CD8-positive, alpha-beta T cell (primary cell): ENCODE measurements at regions of chr12 and their contacts with region 1.

Region 1: DNA sequence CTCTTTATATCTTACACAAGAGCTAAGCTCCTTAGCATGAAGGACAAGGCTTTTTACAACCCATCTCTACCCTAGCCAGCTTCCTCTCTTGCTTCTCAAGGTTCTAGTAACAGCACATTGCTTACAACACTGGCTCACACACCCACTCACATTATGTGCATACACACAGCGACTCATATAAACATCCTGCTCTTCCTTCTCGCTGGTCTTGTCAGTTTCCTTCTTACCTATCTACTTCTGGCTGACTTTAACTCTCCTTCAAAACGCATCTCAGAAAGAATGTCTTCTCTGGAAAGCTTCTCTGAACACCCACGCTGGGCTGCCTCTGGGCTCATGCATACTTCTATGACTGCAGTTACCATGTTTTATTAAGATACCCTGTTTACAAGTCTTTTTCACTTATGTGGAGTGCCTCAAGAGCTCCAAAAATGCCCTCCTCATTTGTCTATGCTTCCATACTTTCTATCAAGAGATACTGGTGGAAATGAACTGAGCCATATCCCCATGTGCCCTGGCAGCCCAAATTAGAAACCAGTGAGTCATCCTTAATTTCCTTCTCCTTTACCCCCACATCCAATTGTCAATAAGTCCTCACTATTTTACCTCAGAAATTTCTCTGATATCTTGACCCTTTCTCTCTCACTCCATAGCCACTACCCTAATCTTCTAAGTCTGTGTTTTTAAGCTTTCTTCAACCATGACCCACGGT is 126.9 kb upstream of the KRAS start:
- DNase-seq: peak in 7 of 9 experiments; percentile 7 to 73 (median 41)
- ATAC-seq: peak; percentile 92
- H3K4me3 ChIP-seq: no peak overlapping the region
- H3K4me3 Mint-ChIP-seq: peak overlapping the region; percentile 51
- H3K27ac ChIP-seq: peak overlapping the region; percentile 41 to 75
- H3K27ac Mint-ChIP-seq: peak overlapping the region; percentile 92
- H3K4me1 ChIP-seq: peaks cover 32% of the 10 kb centered on the region
- H3K4me1 Mint-ChIP-seq: peaks cover 49% of the 10 kb centered on the region
- H3K27me3 ChIP-seq: no peaks in the 10 kb centered on the region
- H3K27me3 Mint-ChIP-seq: no peaks in the 10 kb centered on the region
- CTCF ChIP-seq: no peak

Region 2: DNA sequence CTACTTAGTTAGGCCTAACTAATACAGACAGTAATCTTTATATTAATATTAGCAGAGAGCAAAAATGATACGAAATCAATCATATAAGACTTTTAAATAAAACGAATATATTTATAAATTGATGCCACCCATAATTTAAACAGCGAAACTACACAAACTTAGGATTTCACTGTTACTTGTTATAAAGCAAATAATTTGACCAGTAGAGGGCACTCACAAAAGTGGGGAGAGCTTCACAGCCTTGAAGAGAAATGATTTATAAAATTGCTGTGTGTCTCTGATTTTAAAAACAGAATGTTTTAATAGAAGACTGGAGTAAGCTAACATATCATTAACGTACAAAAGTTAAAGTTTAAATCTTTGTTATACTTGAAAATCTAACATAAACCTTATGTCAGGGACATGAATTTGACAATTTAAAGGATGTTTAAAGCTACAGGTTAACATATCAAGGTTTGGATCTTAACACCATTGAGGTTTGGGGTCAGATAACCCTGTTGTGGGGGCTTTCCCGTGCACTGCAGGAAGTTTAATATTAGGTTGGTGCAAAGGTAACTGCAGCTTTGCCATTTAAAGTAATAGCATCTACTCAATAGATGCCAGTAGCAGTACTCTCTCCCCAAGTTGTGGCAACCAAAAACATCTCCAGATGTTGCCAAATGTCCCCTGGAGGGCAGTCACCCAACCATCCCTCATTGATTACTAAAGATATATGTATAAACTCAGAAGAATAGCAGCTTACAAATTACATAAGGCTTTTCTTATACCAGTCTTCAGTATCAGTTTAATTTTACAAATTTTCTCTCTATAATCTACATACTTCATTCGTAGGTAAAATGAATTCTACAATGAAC is 136.2 kb before region 1 on chr12:
- CTCF ChIA-PET with region 1: interaction called, 11 read pairs
- POLR2A ChIA-PET with region 1: interaction called, 15 read pairs
- intact Hi-C with region 1: no loop called
- DNase-seq: peak in 7 of 9 experiments; percentile 6 to 87 (median 37)
- ATAC-seq: peak; percentile 94
- H3K4me3 ChIP-seq: no peak overlapping the region
- H3K4me3 Mint-ChIP-seq: no peak overlapping the region
- H3K27ac ChIP-seq: peak overlapping the region; percentile 9 to 70
- H3K27ac Mint-ChIP-seq: peak overlapping the region; percentile 81
- H3K4me1 ChIP-seq: peaks cover 9% of the 10 kb centered on the region
- H3K4me1 Mint-ChIP-seq: peaks cover 65% of the 10 kb centered on the region
- H3K27me3 ChIP-seq: no peaks in the 10 kb centered on the region
- H3K27me3 Mint-ChIP-seq: no peaks in the 10 kb centered on the region
- CTCF ChIP-seq: peak; percentile 96

Region 3: DNA sequence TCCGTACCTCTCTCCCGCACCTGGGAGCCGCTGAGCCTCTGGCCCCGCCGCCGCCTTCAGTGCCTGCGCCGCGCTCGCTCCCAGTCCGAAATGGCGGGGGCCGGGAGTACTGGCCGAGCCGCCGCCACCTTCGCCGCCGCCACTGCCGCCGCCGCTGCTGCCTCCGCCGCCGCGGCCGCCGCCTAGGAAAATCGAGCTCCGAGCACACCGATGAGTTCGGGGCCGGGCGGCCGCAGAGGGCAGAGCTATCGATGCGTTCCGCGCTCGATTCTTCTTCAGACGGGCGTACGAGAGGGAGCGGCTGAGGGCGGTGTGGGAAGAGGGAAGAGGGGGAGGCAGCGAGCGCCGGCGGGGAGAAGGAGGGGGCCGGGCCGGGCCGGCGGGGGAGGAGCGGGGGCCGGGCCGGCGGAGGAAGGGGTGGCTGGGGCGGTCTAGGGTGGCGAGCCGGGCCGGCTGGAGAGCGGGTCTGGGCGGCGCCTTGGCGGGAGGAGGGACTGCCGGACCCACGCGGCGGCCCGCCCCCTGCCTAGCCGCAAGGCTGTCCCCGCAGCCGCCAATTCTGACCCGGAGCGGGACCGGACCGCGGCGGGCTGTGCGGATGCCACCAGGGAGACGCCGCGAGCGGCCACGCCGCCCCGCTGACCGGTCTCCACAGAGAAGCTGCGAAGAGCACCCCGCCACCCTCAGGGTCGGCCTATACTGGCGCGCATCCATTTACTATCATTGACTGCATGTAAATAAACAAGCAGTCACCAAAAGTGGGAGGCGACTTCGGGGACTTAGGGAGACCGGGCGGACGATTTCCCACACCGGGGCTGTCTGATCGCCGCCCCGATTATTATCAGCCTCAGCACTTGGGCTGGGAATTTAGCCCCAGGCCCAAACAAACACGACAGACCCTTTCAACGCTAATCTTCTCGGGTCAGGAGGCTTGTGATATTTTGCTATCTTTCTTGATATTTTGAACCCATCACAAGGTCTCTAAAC is 126.6 kb before region 1 on chr12 and contains the start of gene KRAS:
- CTCF ChIA-PET with region 1: interaction called, 3 read pairs
- POLR2A ChIA-PET with region 1: interaction called, 20 read pairs
- intact Hi-C with region 1: no loop called
- DNase-seq: peak; percentile 84 to 98 (median 91)
- ATAC-seq: peak; percentile 90
- H3K4me3 ChIP-seq: peak within 1 kb of the TSS; percentile 70 to 79
- H3K4me3 Mint-ChIP-seq: peak within 1 kb of the TSS; percentile 93
- H3K27ac ChIP-seq: peak within 1 kb of the TSS; percentile 67 to 75
- H3K27ac Mint-ChIP-seq: peak within 1 kb of the TSS; percentile 95
- H3K4me1 ChIP-seq: peaks cover 11% of the 10 kb centered on the region
- H3K4me1 Mint-ChIP-seq: peaks cover 38% of the 10 kb centered on the region
- H3K27me3 ChIP-seq: no peaks in the 10 kb centered on the region
- H3K27me3 Mint-ChIP-seq: no peaks in the 10 kb centered on the region
- CTCF ChIP-seq: no peak
- total RNA-seq, gene KRAS: 47.1 to 49.3 TPM

Region 4: DNA sequence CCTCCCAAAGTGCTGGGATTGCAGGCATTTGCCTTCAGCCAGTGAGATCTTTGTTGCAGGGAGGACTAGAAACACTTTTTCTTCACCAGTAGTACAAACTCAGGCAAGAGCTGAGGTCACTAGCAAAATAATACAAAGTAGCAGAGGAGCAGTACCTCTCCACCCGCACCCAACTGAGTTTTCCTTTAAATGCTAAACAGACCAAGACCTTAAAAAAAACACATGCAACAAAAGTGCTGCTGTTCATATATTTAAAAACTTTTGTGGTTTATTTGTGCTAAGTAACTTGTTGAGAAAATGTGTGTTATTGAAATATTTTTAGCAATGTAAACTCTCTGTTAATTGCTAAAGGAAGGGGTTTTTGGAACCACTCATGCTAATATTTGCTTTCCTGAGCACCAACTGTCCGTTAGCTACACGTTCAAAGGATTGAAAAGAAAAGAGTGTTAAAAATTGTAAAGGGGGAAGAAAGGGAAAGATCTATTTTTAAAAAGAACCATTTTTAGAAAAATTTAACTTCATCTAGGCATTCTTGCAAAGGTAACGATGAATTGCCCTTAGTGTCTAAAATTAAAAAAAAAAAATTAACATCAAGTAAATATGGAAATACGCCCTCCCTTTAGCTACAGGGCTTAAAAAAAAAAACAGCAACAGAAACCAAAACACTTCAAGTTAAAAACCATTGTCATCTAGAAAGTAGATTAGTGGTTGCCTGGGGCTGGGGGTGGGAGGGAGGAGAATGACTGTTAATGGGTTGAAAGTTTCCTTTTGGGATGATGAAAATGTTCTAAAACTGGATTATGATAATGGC is 12.9 kb before region 1 on chr12:
- CTCF ChIA-PET with region 1: interaction called, 5 read pairs
- POLR2A ChIA-PET with region 1: interaction called, 7 read pairs
- intact Hi-C with region 1: loop called in 1 of 2 experiments (anchors 1 kb)
- DNase-seq: peak in 2 of 9 experiments; percentile 23 to 47
- ATAC-seq: peak; percentile 55
- H3K4me3 ChIP-seq: no peak overlapping the region
- H3K4me3 Mint-ChIP-seq: peak overlapping the region; percentile 42
- H3K27ac ChIP-seq: no peak overlapping the region
- H3K27ac Mint-ChIP-seq: peak overlapping the region; percentile 7
- H3K4me1 ChIP-seq: peaks cover 5% of the 10 kb centered on the region
- H3K4me1 Mint-ChIP-seq: peaks cover 14% of the 10 kb centered on the region
- H3K27me3 ChIP-seq: no peaks in the 10 kb centered on the region
- H3K27me3 Mint-ChIP-seq: no peaks in the 10 kb centered on the region
- CTCF ChIP-seq: no peak

Region 5: DNA sequence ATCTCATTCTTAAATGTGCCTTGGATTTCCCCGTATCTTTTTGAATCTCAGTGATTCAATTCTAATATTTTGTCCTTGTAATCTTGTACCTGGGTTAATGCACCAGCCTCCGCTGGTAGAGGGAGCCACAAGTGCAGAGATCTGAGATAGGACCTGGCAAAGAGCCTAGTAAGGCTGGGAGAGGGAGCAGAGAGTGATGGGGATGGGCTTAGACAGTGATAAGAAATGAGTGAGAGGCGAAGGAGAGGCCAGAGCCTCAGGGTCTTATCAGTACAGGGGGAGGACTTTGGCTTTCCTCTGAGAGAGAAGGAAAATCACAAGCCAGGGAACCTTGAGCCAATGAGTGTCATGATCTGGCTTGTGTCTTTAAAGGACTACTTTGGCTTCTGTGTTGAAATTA is 205.9 kb after region 1 on chr12:
- CTCF ChIA-PET with region 1: no interaction called
- POLR2A ChIA-PET with region 1: no interaction called
- intact Hi-C with region 1: no loop called
- DNase-seq: peak in 1 of 9 experiments; percentile 4
- ATAC-seq: no peak
- H3K4me3 ChIP-seq: no peak overlapping the region
- H3K4me3 Mint-ChIP-seq: no peak overlapping the region
- H3K27ac ChIP-seq: no peak overlapping the region
- H3K27ac Mint-ChIP-seq: no peak overlapping the region
- H3K4me1 ChIP-seq: no peaks in the 10 kb centered on the region
- H3K4me1 Mint-ChIP-seq: no peaks in the 10 kb centered on the region
- H3K27me3 ChIP-seq: peaks cover 0 to 3% of the 10 kb centered on the region in 2 experiments
- H3K27me3 Mint-ChIP-seq: no peaks in the 10 kb centered on the region
- CTCF ChIP-seq: no peak